K562 (cell line): ENCODE measurements at regions of chr10 and their contacts with region 1.

Region 1: GRCh38 chr10:4013651-4014121 is 228.7 kb upstream of the KLF6 start:
- DNase-seq: no peak
- ATAC-seq: no peak
- H3K4me3 ChIP-seq: no peak overlapping the region
- H3K27ac ChIP-seq: no peak overlapping the region
- H3K4me1 ChIP-seq: no peaks in the 10 kb centered on the region; a peak in 1 of 5 replicates
- H3K27me3 ChIP-seq: peaks cover 0 to 9% of the 10 kb centered on the region in 2 experiments; a peak in 1 of 5 replicates
- CTCF ChIP-seq: no peak
- EP300 ChIP-seq: no peak
- POLR2A ChIP-seq: no peak
- RAD21 ChIP-seq: no peak

Region 2: DNA sequence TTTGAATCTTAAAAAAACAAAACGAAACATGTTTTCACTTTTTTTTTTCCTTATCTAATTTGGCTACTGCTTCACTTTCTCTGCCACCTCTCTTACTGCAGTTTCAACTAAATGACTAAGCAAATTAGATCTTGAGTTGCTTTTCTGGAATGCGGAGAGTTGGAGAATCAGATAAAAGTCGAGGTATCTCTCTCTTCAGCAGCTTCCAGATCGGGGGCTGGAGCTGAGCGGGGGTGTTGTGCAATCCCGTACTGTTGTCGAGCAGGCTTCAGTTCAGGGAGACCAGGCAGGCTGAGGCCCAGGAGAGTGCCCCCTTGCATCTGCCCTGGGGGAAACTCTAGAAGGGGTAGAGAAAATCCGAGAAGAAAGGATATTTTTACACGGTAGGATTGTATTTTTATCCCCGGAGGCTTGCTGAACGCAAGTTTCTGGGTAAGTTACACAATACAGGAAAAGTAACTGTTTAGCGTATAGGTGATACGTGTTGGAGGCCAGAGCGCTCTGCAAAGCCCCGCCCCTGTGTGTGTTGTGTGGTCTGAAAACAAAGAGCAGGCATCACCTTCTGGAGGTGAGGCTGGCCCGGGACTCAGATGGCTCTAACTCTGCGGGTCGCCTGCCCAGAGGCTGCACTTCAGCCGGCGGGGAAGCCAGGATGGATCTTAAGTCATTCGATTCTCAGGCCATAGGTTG is 345.3 kb before region 1 on chr10:
- CTCF ChIA-PET with region 1: no interaction called
- POLR2A ChIA-PET with region 1: no interaction called
- in situ Hi-C with region 1: no loop called
- intact Hi-C with region 1: loop called (anchors 10 kb)
- DNase-seq: peak; percentile 41 to 87 (median 64)
- ATAC-seq: peak; percentile 71
- H3K4me3 ChIP-seq: no peak overlapping the region
- H3K27ac ChIP-seq: peak overlapping the region; percentile 66
- H3K4me1 ChIP-seq: peaks cover 39 to 51% of the 10 kb centered on the region in 2 experiments
- H3K27me3 ChIP-seq: no peaks in the 10 kb centered on the region
- CTCF ChIP-seq: no peak; a peak in 1 of 6 replicates
- EP300 ChIP-seq: peak; percentile 88
- POLR2A ChIP-seq: no peak
- RAD21 ChIP-seq: peak; percentile 19 to 27; a peak in 2 of 4 replicates

Region 3: GRCh38 chr10:4051011-4051640 is 37.4 kb after region 1 on chr10:
- CTCF ChIA-PET with region 1: no interaction called
- POLR2A ChIA-PET with region 1: no interaction called
- in situ Hi-C with region 1: no loop called
- intact Hi-C with region 1: no loop called
- DNase-seq: peak in 1 of 4 experiments; percentile 29
- ATAC-seq: 0 out of 3 replicates have a peak, but pooled peaks have one; percentile 49
- H3K4me3 ChIP-seq: no peak overlapping the region
- H3K27ac ChIP-seq: no peak overlapping the region
- H3K4me1 ChIP-seq: no peaks in the 10 kb centered on the region
- H3K27me3 ChIP-seq: peaks cover 0 to 6% of the 10 kb centered on the region in 2 experiments; a peak in 1 of 5 replicates
- CTCF ChIP-seq: no peak
- EP300 ChIP-seq: no peak
- POLR2A ChIP-seq: no peak
- RAD21 ChIP-seq: no peak